PC-9 (cell line): ENCODE measurements at regions of chr10 and their contacts with region 1.

Region 1: GRCh38 chr10:112637901-112638300 is 190.9 kb downstream of the VTI1A start:
- DNase-seq: no peak
- H3K4me3 ChIP-seq: no peak overlapping the region
- H3K27ac ChIP-seq: no peak overlapping the region
- H3K4me1 ChIP-seq: no peaks in the 10 kb centered on the region
- H3K27me3 ChIP-seq: no peaks in the 10 kb centered on the region
- CTCF ChIP-seq: no peak

Region 2: GRCh38 chr10:112700215-112700671 is 62.3 kb after region 1 on chr10:
- CTCF ChIA-PET with region 1: no interaction called
- POLR2A ChIA-PET with region 1: interaction called, 10 read pairs
- intact Hi-C with region 1: no loop called
- DNase-seq: no peak
- H3K4me3 ChIP-seq: no peak overlapping the region
- H3K27ac ChIP-seq: no peak overlapping the region
- H3K4me1 ChIP-seq: no peaks in the 10 kb centered on the region
- H3K27me3 ChIP-seq: no peaks in the 10 kb centered on the region
- CTCF ChIP-seq: no peak